PC-9 (cell line): ENCODE measurements at regions of chrX and their contacts with region 1.

Region 1: DNA sequence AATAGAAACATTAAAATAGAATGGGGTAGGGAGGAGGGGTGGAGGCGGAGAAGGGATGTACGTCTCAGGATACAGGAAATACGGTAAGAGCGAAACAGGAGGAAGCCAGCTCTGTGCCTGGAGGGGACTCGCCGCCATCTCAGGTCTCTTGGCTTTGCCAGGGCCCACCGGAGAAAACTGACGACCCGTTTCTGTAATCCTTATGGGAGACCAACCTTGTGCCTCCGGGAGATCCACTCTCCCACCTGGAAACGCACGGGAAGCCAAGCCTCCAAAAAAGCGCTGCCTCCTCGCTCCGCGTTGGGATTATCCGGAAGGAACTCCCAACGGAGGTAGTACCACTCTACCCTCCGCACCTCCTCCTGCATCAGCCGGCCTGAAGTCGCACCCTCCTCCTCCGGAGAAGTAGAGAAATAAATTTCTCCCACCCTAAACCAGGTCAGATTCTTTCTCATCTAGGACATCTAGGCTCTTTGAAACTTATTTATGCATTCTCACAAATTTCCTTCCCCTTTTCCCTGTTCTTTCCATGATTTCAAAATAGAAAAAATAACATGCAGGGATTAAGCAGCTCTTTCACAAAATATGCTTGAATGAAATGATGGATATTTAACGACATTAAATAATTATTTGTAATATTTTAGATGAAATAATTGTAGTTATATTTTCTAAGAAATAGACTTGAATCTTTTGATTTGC is at the start of gene NBDY:
- DNase-seq: peak in 1 of 2 experiments; percentile 59
- H3K4me3 ChIP-seq: peak within 1 kb of the TSS; percentile 66
- H3K27ac ChIP-seq: peak within 1 kb of the TSS; percentile 43; the same call in 1 of the 2 replicates
- H3K4me1 ChIP-seq: no peaks in the 10 kb centered on the region
- H3K27me3 ChIP-seq: no peaks in the 10 kb centered on the region
- CTCF ChIP-seq: no peak
- total RNA-seq, gene NBDY: 76.6 and 99.3 TPM in 2 replicates

Region 2: DNA sequence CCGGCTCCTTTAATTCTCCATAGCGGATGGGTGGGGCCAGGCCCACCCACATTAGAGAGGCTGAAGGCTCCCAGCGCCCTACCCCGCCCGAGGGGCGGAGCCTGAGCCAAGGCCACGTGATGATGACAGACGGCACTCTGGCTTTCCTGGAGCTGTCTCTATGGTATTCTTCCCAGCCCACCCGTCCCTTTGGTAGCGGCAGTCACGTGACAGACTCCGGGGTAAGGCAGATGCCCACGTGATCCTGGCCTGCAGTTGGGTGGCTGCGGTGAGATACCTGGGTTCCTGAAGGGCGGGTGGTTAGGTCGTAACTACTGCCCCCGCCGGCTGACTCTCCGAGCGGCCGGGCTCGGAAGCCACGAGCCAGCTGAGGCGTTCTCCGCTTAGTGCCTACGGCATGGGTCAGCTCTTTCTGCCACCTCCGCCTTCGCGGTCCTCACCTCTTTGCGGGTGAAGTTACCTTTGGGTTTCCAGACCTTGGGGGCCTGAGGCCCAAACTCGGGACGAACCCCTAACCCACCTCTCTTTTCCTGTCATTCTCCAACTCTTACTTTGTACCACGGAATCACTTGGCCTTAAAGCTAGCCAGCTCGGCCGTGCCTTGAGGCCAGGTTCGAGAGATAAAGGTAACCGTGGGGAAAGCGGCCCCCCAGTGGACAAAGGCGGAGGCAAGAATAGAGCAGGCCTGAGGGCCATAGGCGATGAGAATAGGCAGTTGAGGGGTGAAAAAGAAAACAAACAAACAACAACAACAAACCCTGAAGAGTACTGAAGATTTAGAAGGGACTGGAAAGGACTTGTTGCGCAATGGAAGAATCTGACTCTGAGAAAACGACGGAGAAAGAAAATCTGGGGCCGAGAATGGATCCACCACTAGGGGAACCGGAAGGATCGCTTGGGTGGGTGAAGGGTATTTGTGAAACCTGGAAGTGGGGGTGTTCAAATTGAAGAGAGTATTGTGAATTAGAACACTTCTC is 1011.5 kb before region 1 on chrX and contains the start of gene RRAGB:
- CTCF ChIA-PET with region 1: interaction called, 4 read pairs
- POLR2A ChIA-PET with region 1: no interaction called
- intact Hi-C with region 1: loop called (anchors 10 kb)
- DNase-seq: peak; percentile 89 to 96
- H3K4me3 ChIP-seq: peak within 1 kb of the TSS; percentile 91
- H3K27ac ChIP-seq: peak within 1 kb of the TSS; percentile 86
- H3K4me1 ChIP-seq: peaks cover 11% of the 10 kb centered on the region; the same call in 1 of the 2 replicates
- H3K27me3 ChIP-seq: no peaks in the 10 kb centered on the region
- CTCF ChIP-seq: peak; percentile 69
- total RNA-seq, gene RRAGB: 18.6 and 23.3 TPM in 2 replicates

Region 3: DNA sequence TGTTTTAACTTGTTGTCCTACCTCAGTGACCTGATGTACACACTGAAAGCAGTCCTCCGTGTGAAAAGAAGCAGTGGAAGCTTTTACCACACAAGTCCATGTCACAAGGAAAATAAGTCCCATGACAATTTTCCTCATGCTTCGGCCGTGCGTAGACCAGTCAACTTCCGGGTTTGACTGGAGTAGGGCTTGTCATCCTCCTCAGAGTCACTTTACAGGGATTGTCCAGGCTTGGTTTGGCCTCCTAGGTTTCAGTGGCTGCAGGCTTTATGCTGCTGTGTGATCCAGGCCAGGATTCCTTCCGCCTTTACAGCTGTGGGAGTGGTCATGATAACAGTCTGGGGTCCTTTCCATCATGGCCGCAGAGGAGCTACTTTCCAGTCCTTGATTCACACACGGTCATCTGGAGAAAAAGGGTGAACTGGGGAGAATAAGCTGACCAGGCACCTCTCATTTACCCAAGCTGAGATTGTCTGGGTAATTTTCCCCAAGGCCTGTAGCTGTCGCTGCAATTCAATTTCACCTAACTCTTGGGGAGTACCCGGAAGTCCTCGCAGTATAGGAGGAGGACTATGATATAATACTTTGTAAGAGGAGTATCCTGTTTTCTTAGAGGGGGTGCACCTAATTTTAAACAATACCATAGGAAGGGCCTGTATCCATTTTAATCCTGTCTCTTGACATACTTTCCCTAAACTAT is 703.3 kb before region 1 on chrX:
- CTCF ChIA-PET with region 1: interaction called, 3 read pairs
- POLR2A ChIA-PET with region 1: no interaction called
- intact Hi-C with region 1: loop called (anchors 5 kb)
- DNase-seq: peak in 1 of 2 experiments; percentile 54
- H3K4me3 ChIP-seq: no peak overlapping the region
- H3K27ac ChIP-seq: no peak overlapping the region
- H3K4me1 ChIP-seq: peaks cover 29% of the 10 kb centered on the region
- H3K27me3 ChIP-seq: no peaks in the 10 kb centered on the region
- CTCF ChIP-seq: no peak

Region 4: DNA sequence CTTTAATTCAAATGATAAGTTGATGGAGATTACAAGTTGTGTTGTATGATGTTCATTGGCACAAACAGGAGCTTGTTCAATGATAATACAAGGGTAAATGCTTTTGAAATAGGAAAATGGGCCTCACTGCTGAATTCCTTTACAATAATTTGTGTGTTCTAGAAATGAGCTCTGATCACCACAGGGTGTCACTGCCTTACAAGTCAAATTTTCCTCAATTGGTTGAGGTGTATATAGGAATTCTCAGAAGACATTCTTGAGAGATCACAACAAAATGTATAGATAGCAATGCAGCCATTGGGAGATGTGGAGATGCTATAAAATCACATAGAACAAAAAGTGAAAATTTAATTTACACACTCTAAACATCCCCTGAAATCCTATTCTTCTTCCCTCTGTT is 447.5 kb before region 1 on chrX:
- CTCF ChIA-PET with region 1: interaction called, 22 read pairs
- POLR2A ChIA-PET with region 1: interaction called, 7 read pairs
- intact Hi-C with region 1: loop called (anchors 1 kb)
- DNase-seq: peak; percentile 4 to 38
- H3K4me3 ChIP-seq: no peak overlapping the region
- H3K27ac ChIP-seq: no peak overlapping the region
- H3K4me1 ChIP-seq: no peaks in the 10 kb centered on the region
- H3K27me3 ChIP-seq: no peaks in the 10 kb centered on the region
- CTCF ChIP-seq: peak; percentile 62

Region 5: GRCh38 chrX:56503941-56504662 is 225.2 kb before region 1 on chrX:
- CTCF ChIA-PET with region 1: interaction called, 6 read pairs
- POLR2A ChIA-PET with region 1: interaction called, 4 read pairs
- intact Hi-C with region 1: loop called (anchors 1 kb)
- DNase-seq: peak; percentile 89 to 91
- H3K4me3 ChIP-seq: peak overlapping the region; percentile 46
- H3K27ac ChIP-seq: peak overlapping the region; percentile 100
- H3K4me1 ChIP-seq: peaks cover 57% of the 10 kb centered on the region
- H3K27me3 ChIP-seq: no peaks in the 10 kb centered on the region
- CTCF ChIP-seq: no peak; the same call in 1 of the 2 replicates

Region 6: DNA sequence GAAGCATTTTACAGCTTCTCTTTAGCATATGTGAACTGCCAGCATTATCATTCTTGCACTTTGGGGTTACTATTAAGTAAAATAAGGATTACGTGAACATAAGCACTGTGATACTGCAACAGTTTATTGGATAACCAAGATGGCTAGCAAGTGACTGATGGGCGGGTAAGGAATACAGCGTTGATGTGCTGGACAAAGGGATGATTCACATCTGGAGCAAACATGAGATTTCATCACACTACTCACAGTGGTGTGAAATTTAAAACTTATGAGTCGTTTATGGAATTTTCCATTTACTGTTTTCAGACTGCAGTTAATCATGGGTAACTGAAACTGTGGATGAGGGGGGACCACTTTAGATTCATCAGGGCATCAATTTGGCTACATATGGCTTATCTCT is 15.7 kb after region 1 on chrX:
- CTCF ChIA-PET with region 1: no interaction called
- POLR2A ChIA-PET with region 1: no interaction called
- intact Hi-C with region 1: no loop called
- DNase-seq: peak in 1 of 2 experiments; percentile 42
- H3K4me3 ChIP-seq: no peak overlapping the region
- H3K27ac ChIP-seq: no peak overlapping the region
- H3K4me1 ChIP-seq: peaks cover 6% of the 10 kb centered on the region; the same call in 1 of the 2 replicates
- H3K27me3 ChIP-seq: no peaks in the 10 kb centered on the region
- CTCF ChIP-seq: no peak

Region 7: DNA sequence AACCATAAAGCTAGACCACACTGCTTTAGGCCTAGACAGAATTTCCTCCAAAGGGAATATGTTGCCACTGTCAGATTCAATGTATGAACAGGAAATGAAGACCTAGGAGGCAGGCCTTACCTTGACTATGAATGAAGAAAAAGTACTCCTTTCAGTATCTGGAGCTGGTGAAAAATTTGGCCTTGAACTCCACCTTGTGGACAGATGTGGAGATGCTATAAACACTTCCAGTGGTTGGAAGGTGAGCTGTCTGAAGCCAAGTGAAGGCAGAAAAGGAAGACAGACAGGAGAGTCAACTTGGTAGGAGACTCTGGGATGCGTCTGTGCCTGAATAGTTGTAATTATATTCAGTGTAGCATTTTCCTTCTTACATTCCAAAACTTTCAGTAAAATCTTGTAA is 248.9 kb after region 1 on chrX:
- CTCF ChIA-PET with region 1: interaction called, 5 read pairs
- POLR2A ChIA-PET with region 1: no interaction called
- intact Hi-C with region 1: loop called (anchors 10 kb)
- DNase-seq: peak in 1 of 2 experiments; percentile 62
- H3K4me3 ChIP-seq: no peak overlapping the region
- H3K27ac ChIP-seq: no peak overlapping the region
- H3K4me1 ChIP-seq: peaks cover 9% of the 10 kb centered on the region; the same call in 1 of the 2 replicates
- H3K27me3 ChIP-seq: no peaks in the 10 kb centered on the region
- CTCF ChIP-seq: peak; percentile 72